ENCODE measurements at regions of chr7 and their contacts with region 1.

Region 1: DNA sequence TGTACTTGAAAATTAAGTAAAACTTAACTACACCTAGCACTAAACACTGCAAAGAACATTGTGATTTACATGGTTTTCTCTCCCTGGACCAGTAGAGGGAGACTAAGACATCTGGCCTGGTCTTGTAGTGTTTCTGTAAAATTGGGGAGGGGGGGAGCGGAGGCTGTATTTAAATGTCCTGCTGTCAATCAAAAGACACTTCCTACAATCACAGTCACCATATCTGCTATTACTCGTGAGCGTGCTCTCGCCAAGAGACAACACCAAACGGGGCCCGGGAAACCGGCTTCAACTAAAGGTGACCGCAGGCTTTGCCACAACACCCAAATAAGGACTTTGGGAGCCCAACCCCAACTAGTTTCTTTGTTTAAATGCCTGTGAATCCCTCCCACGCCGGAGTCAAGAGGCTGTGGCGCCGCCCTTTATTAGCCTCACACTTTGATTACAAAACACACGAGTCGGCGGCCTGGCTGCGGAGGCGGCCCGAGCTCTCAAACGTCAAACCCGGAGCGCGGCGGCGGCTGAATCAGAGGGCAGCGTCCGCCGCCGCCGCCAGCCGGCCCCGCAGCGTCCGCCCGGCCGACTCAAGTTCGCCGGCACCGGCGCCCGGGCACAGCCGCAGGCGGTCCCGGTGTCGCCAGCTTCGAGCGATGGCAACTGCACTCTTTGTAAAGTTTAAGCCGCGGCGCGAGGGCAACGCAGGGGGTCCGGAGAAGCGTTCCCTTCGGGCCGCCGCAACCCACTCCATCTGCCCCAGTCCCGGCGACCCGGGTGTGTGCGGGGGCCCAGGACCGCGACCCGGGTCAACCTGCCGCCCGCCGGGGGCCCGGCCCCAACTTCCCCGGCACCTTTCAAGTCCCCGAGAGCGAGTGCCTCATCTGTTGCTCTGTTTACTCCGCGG is 1.3 kb downstream of the KDM7A start:
- DNase-seq: peak; percentile 98
- H3K4me3 Mint-ChIP-seq: peak overlapping the region; percentile 82
- H3K27ac Mint-ChIP-seq: peak overlapping the region; percentile 87
- H3K4me1 Mint-ChIP-seq: peaks cover 10% of the 10 kb centered on the region
- H3K27me3 Mint-ChIP-seq: peaks cover 2% of the 10 kb centered on the region
- CTCF ChIP-seq: peak; percentile 69

Region 2: DNA sequence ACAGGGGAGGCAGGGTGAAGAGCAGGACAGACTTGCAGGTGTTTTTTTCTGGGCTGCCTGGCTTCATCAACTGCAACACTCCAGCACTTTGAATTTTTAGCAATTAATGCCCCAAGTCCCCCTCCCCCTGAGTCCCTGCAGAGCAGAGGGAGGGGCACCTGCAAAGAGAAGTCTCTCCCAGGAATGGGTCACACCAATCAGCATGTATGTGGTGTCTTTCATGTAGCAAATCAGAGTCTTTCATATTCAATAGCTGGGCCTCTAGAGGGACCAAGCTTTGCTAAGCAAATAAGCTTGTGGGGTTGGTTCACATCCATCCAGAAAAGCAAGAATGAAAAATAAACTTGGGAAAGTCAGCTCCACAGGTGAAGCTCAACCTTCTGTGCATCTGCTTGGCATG is 203.4 kb before region 1 on chr7:
- CTCF ChIA-PET with region 1: no interaction called
- POLR2A ChIA-PET with region 1: no interaction called
- intact Hi-C with region 1: no loop called
- DNase-seq: no peak
- H3K4me3 Mint-ChIP-seq: no peak overlapping the region
- H3K27ac Mint-ChIP-seq: no peak overlapping the region
- H3K4me1 Mint-ChIP-seq: no peaks in the 10 kb centered on the region
- H3K27me3 Mint-ChIP-seq: peaks cover 11% of the 10 kb centered on the region
- CTCF ChIP-seq: no peak

Region 3: DNA sequence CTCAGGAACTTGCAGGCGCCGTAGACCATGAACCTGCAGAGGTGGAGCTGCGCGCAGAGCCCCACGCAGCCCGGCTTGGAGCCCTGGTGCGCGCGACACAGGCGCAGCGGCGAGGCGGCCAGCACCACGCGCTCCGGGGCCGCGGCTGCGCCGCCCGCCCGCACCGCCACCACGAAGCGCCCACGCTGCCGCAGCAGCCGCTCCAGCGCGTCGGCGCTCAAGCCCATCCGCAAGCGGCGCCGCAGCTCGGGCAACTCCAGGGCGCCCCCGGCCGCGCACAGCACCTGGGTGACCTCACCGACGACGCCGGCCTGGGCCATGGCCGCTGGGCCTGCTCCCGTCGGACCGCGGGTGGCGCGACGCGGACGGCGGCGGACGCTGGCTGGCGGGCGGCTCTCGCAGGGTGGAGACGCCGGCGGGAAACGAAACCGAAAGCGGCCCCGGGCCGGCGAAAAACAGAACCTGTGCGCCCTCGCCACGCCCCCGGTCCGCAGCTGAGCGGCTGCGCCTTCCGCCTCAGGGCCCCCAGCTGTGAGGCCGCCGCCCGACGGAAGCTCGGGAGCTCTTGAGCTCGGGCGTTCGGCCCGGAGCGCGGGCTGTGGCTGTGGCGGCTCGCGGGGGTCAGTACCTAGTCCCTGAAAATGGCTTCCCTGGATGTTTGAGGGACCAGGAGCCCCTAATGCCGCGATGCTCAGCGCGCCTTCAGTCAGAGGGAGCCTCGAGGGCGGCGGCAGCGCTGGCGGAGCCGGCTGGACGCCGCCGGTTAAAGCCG is 112.8 kb before region 1 on chr7 and contains the start of gene PARP12:
- CTCF ChIA-PET with region 1: no interaction called
- POLR2A ChIA-PET with region 1: interaction called, 18 read pairs
- intact Hi-C with region 1: loop called (anchors 2 kb)
- DNase-seq: peak; percentile 79
- H3K4me3 Mint-ChIP-seq: peak within 1 kb of the TSS; percentile 78
- H3K27ac Mint-ChIP-seq: peak within 1 kb of the TSS; percentile 21
- H3K4me1 Mint-ChIP-seq: peaks cover 33% of the 10 kb centered on the region
- H3K27me3 Mint-ChIP-seq: no peaks in the 10 kb centered on the region
- CTCF ChIP-seq: no peak
- total RNA-seq, gene PARP12: 35.0 and 41.4 TPM in 2 replicates

Region 4: DNA sequence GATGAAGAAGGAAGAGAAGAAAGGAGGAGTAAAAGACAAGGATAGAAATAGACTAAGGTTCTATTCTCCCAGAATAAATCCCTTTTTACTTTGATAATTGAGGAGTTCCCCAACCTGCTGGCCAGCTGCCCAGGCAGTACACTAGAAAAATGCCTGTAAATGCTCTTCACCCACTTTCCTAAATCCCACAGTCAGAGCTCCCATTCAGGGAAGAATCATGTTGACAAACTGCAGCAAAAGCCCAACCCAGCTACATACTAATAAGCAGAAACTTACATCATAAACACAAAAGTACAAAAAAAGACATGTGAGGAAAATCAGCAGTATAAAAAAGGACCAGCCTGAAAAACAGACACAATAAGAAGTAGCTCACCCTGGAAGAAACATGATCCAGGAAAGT is 17.1 kb after region 1 on chr7:
- CTCF ChIA-PET with region 1: interaction called, 4 read pairs
- POLR2A ChIA-PET with region 1: interaction called, 33 read pairs
- intact Hi-C with region 1: no loop called
- DNase-seq: no peak
- H3K4me3 Mint-ChIP-seq: no peak overlapping the region
- H3K27ac Mint-ChIP-seq: no peak overlapping the region
- H3K4me1 Mint-ChIP-seq: peaks cover 5% of the 10 kb centered on the region
- H3K27me3 Mint-ChIP-seq: peaks cover 34% of the 10 kb centered on the region
- CTCF ChIP-seq: no peak

Region 5: DNA sequence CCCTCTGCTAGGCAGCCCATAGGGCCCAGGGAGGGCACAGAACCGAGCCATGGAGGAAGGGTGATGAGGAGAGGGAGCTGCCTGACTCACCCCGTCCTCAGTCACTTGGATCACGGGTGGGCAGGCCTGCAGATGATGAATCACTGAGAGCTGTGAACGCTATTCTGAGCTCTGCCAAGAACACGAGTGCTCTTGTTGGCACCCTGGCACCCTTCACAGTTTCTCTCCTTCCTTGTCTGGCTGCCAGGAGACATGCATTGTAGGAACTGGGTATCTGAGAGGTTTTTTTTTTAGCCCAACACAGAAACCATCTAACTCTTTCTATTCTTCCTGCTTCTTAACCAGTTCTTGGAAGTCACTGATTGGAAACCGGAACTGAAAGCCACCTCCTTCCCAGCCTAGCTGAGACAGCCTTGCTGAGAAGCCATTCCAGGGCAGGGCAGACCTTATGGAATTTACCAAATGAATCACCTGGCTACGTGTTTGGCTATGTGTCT is 140.7 kb after region 1 on chr7:
- CTCF ChIA-PET with region 1: interaction called, 7 read pairs
- POLR2A ChIA-PET with region 1: interaction called, 97 read pairs
- intact Hi-C with region 1: no loop called
- DNase-seq: peak; percentile 80
- H3K4me3 Mint-ChIP-seq: peak overlapping the region; percentile 71
- H3K27ac Mint-ChIP-seq: peak overlapping the region; percentile 95
- H3K4me1 Mint-ChIP-seq: peaks cover 32% of the 10 kb centered on the region
- H3K27me3 Mint-ChIP-seq: no peaks in the 10 kb centered on the region
- CTCF ChIP-seq: no peak

Region 6: GRCh38 chr7:140397784-140398750 is 222.6 kb after region 1 on chr7 and contains the start of gene SLC37A3:
- CTCF ChIA-PET with region 1: interaction called, 5 read pairs
- POLR2A ChIA-PET with region 1: no interaction called
- intact Hi-C with region 1: loop called (anchors 5 kb)
- DNase-seq: peak; percentile 85
- H3K4me3 Mint-ChIP-seq: peak within 1 kb of the TSS; percentile 99
- H3K27ac Mint-ChIP-seq: peak within 1 kb of the TSS; percentile 99
- H3K4me1 Mint-ChIP-seq: peaks cover 22% of the 10 kb centered on the region
- H3K27me3 Mint-ChIP-seq: no peaks in the 10 kb centered on the region
- CTCF ChIP-seq: no peak
- total RNA-seq, gene SLC37A3: 25.5 and 36.1 TPM in 2 replicates

Region 7: GRCh38 chr7:140494867-140495266 is 319.4 kb after region 1 on chr7:
- CTCF ChIA-PET with region 1: interaction called, 8 read pairs
- POLR2A ChIA-PET with region 1: no interaction called
- intact Hi-C with region 1: loop called (anchors 1 kb)
- DNase-seq: no peak
- H3K4me3 Mint-ChIP-seq: no peak overlapping the region
- H3K27ac Mint-ChIP-seq: no peak overlapping the region
- H3K4me1 Mint-ChIP-seq: no peaks in the 10 kb centered on the region
- H3K27me3 Mint-ChIP-seq: no peaks in the 10 kb centered on the region
- CTCF ChIP-seq: no peak

Region 8: DNA sequence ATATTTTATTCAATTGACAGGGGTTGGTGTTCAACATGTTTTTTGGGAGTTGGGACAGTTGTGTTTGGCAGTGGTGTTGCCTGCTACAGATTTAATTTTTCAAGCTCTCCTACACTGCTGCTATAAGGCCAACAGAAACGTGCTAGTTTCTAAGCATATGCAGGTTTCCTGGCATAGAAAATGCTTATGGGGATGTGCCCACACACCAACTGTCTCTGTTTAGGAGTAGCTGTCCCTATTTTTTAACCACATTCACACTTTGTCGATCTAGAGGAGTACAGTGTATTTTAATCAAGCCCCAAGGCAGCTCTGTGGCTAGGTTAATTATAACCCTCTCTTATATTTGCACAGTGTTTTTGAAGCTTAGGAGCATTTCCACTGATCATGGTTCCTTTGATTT is 927.0 kb after region 1 on chr7:
- CTCF ChIA-PET with region 1: no interaction called
- POLR2A ChIA-PET with region 1: no interaction called
- intact Hi-C with region 1: no loop called
- DNase-seq: no peak
- H3K4me3 Mint-ChIP-seq: no peak overlapping the region
- H3K27ac Mint-ChIP-seq: no peak overlapping the region
- H3K4me1 Mint-ChIP-seq: no peaks in the 10 kb centered on the region
- H3K27me3 Mint-ChIP-seq: no peaks in the 10 kb centered on the region
- CTCF ChIP-seq: no peak

Region 9: GRCh38 chr7:141242568-141242967 is 1067.1 kb after region 1 on chr7:
- CTCF ChIA-PET with region 1: no interaction called
- POLR2A ChIA-PET with region 1: no interaction called
- intact Hi-C with region 1: no loop called
- DNase-seq: no peak
- H3K4me3 Mint-ChIP-seq: no peak overlapping the region
- H3K27ac Mint-ChIP-seq: no peak overlapping the region
- H3K4me1 Mint-ChIP-seq: no peaks in the 10 kb centered on the region
- H3K27me3 Mint-ChIP-seq: peaks cover 11% of the 10 kb centered on the region
- CTCF ChIP-seq: no peak

Measured in MCF 10A (cell line).